ENCODE measurements at regions of chr20 and their contacts with region 1.

Region 1: DNA sequence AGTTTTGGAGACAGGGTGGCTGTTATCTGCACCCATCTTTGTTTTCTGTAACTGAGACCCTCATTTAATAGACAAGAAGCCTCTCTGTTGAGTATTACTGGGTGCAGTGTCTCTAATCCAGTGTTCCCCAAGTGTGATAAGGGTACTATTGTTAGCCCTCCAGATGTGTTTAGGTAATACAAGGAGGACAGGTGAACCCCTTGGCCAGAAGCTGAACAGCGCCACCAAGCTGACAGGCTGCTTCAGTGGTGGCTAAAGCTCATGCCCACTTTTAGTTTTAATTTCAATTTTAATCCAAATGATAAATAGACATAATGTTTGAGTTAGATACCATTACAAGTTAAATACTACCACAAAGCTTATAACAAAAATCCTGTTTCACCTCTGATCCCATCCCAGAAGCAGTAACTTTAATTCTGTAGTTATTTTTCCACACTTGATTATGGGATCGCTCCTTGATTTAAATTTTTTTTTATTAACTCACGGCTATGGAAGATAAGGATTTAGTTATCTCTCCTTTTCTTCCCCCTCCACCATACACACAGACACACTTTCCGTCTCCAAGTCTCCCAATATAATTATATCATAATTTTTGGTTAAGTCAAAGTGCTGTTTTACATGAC is 8.4 kb upstream of the STK35 start:
- DNase-seq: peak; percentile 39 to 54 (median 51)
- H3K4me3 ChIP-seq: no peak overlapping the region
- H3K27ac ChIP-seq: no peak overlapping the region
- H3K4me1 ChIP-seq: no peaks in the 10 kb centered on the region
- H3K27me3 ChIP-seq: peaks cover 0 to 41% (median 3%) of the 10 kb centered on the region in 5 experiments

Region 2: DNA sequence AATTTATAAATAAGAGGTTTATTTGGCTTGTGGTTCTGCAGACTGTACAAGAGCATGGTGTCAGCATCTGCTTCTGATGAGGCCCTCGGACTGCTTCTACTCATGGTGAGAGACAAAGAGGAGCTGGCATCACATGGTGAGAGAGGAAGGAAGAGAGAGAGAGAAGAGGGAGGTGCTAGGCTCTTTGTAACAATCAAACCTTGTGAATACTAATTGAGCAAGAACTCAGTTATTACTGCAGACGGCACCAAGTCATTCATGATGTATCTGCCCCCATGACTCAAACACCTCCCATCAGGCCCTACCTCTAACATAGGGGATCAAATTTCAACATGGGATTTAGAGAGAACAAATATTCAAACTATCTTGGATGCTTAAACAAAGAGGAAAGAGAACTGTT is 429.4 kb before region 1 on chr20:
- CTCF ChIA-PET with region 1: no interaction called
- POLR2A ChIA-PET with region 1: no interaction called
- DNase-seq: no peak
- H3K4me3 ChIP-seq: no peak overlapping the region
- H3K27ac ChIP-seq: no peak overlapping the region
- H3K4me1 ChIP-seq: peaks cover 0 to 8% (median 1%) of the 10 kb centered on the region in 4 experiments
- H3K27me3 ChIP-seq: peaks cover 0 to 25% (median 13%) of the 10 kb centered on the region in 5 experiments

Region 3: GRCh38 chr20:2005831-2006426 is 87.3 kb before region 1 on chr20:
- CTCF ChIA-PET with region 1: interaction called, 15 read pairs
- POLR2A ChIA-PET with region 1: no interaction called
- DNase-seq: peak; percentile 68 to 84 (median 81)
- H3K4me3 ChIP-seq: no peak overlapping the region
- H3K27ac ChIP-seq: no peak overlapping the region
- H3K4me1 ChIP-seq: no peaks in the 10 kb centered on the region
- H3K27me3 ChIP-seq: peaks cover 0 to 29% (median 4%) of the 10 kb centered on the region in 5 experiments

Region 4: GRCh38 chr20:2109425-2110210 is 16.3 kb after region 1 on chr20:
- CTCF ChIA-PET with region 1: no interaction called
- POLR2A ChIA-PET with region 1: no interaction called
- DNase-seq: peak; percentile 13 to 28 (median 20)
- H3K4me3 ChIP-seq: no peak overlapping the region
- H3K27ac ChIP-seq: peak overlapping the region in 1 of 2 experiments; percentile 70
- H3K4me1 ChIP-seq: peaks cover 7 to 27% (median 15%) of the 10 kb centered on the region in 4 experiments
- H3K27me3 ChIP-seq: no peaks in the 10 kb centered on the region

Region 5: GRCh38 chr20:2132461-2132901 is 39.2 kb after region 1 on chr20:
- CTCF ChIA-PET with region 1: no interaction called
- POLR2A ChIA-PET with region 1: no interaction called
- DNase-seq: no peak
- H3K4me3 ChIP-seq: no peak overlapping the region
- H3K27ac ChIP-seq: no peak overlapping the region
- H3K4me1 ChIP-seq: no peaks in the 10 kb centered on the region
- H3K27me3 ChIP-seq: no peaks in the 10 kb centered on the region

Region 6: GRCh38 chr20:2183381-2183780 is 90.1 kb after region 1 on chr20:
- CTCF ChIA-PET with region 1: no interaction called
- POLR2A ChIA-PET with region 1: no interaction called
- DNase-seq: no peak
- H3K4me3 ChIP-seq: no peak overlapping the region
- H3K27ac ChIP-seq: no peak overlapping the region
- H3K4me1 ChIP-seq: peaks cover 0 to 14% (median 12%) of the 10 kb centered on the region in 4 experiments
- H3K27me3 ChIP-seq: no peaks in the 10 kb centered on the region